ENCODE measurements at regions of chr10 and their contacts with region 1.

Region 1: GRCh38 chr10:62183442-62183841 is 85.2 kb downstream of the RTKN2 start:
- DNase-seq: peak; percentile 40
- H3K4me3 Mint-ChIP-seq: no peak overlapping the region
- H3K27ac Mint-ChIP-seq: peak overlapping the region; percentile 96
- H3K4me1 Mint-ChIP-seq: peaks cover 85% of the 10 kb centered on the region
- H3K27me3 Mint-ChIP-seq: no peaks in the 10 kb centered on the region

Region 2: DNA sequence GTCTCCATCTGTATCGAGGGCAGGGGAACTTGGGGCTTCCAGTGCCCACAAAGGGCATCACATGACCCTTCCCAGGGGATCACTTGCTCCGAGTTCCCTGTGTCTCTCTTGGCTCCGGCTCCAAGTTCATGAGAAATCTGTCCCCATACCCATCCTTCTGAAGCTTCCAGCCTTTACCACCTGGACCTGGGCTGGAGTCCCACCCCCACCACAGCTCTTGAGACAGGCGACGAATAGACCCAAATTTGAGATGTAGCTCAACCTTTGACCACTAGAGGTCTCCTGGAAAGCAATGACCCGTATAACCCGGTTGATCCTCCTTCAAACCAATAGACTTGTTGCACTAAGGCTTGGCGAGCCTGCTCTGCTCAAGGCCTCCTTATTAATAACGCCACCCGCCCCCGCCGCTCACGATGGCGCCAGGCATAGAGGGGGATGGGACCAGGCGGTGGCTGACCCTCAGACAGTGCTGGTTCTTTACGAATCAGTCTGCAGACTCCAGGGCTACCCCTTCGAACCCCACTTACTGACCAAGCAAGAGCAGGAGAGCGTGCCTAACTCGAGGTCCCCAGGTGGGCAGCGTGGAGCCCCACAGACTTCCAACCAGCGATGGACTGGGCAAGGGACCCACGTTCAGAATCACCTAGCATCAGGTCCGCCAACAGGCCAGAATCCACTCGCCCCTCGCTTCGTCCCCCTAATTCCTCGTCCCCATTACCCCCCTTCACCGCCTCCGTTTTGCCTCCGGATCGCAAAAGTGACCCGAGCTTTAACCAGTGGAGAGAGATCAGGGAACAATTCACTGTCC is 286.4 kb before region 1 on chr10:
- CTCF ChIA-PET with region 1: no interaction called
- POLR2A ChIA-PET with region 1: interaction called, 7 read pairs
- intact Hi-C with region 1: loop called (anchors 1 kb)
- DNase-seq: peak; percentile 70
- H3K4me3 Mint-ChIP-seq: peak overlapping the region; percentile 66
- H3K27ac Mint-ChIP-seq: peak overlapping the region; percentile 95
- H3K4me1 Mint-ChIP-seq: peaks cover 43% of the 10 kb centered on the region
- H3K27me3 Mint-ChIP-seq: no peaks in the 10 kb centered on the region

Region 3: DNA sequence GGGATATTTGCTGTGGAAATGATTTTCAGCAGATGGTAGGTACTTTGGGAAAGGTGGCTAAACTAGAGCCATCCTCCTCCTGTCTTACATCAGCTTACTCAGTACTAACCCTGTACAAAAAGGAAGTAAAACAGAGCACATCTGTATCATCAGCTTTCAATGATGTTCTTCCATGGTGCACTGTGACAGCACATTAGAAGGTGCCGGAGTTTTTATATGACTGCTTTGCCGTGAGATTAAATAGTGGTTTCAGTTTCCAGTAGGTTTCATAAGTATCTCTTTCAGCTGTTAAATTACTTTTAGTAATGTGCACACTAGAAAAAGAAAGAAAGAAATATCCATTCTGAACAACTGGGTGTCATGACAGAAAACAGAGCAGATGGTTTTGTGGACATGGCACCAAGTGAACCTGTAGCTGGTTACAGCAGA is 195.5 kb before region 1 on chr10:
- CTCF ChIA-PET with region 1: no interaction called
- POLR2A ChIA-PET with region 1: interaction called, 14 read pairs
- intact Hi-C with region 1: loop called (anchors 1 kb)
- DNase-seq: peak; percentile 50
- H3K4me3 Mint-ChIP-seq: peak overlapping the region; percentile 59
- H3K27ac Mint-ChIP-seq: peak overlapping the region; percentile 95
- H3K4me1 Mint-ChIP-seq: peaks cover 91% of the 10 kb centered on the region
- H3K27me3 Mint-ChIP-seq: no peaks in the 10 kb centered on the region

Region 4: GRCh38 chr10:62109587-62110293 is 73.7 kb before region 1 on chr10:
- CTCF ChIA-PET with region 1: interaction called, 3 read pairs
- POLR2A ChIA-PET with region 1: interaction called, 4 read pairs
- intact Hi-C with region 1: loop called (anchors 2 kb)
- DNase-seq: no peak
- H3K4me3 Mint-ChIP-seq: no peak overlapping the region
- H3K27ac Mint-ChIP-seq: no peak overlapping the region
- H3K4me1 Mint-ChIP-seq: peaks cover 46% of the 10 kb centered on the region
- H3K27me3 Mint-ChIP-seq: no peaks in the 10 kb centered on the region

Region 5: DNA sequence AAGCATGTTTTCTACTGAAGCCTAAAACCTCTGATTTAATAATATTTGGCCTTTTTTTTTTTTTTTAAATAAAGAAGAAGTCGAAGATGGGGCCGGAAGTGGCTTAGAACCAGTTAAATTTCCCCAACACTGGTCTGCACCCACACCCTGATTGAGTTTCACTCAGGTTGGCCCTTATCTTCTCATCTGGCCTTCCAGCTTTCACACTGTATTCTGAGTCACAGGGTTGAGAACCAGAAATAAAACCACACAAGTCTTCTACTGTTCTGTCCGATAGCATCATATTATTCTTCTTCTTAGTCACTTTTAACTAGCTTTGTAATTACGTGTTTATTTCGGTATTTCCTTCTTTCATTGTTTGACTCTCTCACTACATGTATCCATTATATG is 200.6 kb after region 1 on chr10:
- CTCF ChIA-PET with region 1: no interaction called
- POLR2A ChIA-PET with region 1: interaction called, 3 read pairs
- intact Hi-C with region 1: loop called (anchors 2 kb)
- DNase-seq: peak; percentile 73
- H3K4me3 Mint-ChIP-seq: no peak overlapping the region
- H3K27ac Mint-ChIP-seq: peak overlapping the region; percentile 48
- H3K4me1 Mint-ChIP-seq: peaks cover 61% of the 10 kb centered on the region
- H3K27me3 Mint-ChIP-seq: no peaks in the 10 kb centered on the region

Region 6: DNA sequence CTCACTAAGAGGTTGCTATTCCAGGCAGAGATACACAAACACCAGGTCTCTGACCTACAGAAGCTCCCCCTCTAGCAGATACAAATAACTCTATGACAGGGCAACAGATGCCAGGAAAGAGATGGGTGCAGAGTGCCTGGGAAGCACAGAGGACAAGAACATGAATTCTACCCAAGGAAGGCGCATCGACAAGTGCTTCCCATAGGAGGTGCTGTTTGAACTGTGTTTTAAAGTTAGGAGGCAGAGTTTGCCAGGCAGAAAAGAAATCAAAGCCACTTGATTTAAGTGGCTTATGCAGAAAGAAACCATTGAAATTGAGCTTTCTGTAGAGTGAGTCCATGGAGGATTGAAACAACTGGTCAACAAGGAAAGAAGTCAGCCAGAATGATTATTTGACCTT is 668.0 kb after region 1 on chr10:
- CTCF ChIA-PET with region 1: no interaction called
- POLR2A ChIA-PET with region 1: no interaction called
- intact Hi-C with region 1: loop called (anchors 10 kb)
- DNase-seq: peak; percentile 55
- H3K4me3 Mint-ChIP-seq: no peak overlapping the region
- H3K27ac Mint-ChIP-seq: no peak overlapping the region
- H3K4me1 Mint-ChIP-seq: peaks cover 46% of the 10 kb centered on the region
- H3K27me3 Mint-ChIP-seq: peaks cover 8% of the 10 kb centered on the region